PC-3 (cell line): ENCODE measurements at regions of chr12 and their contacts with region 1.

Region 1: GRCh38 chr12:76784600-76785051 is 20.7 kb downstream of the ZDHHC17 start:
- DNase-seq: peak; percentile 43
- ATAC-seq: peak; percentile 44
- H3K4me3 ChIP-seq: no peak overlapping the region
- H3K27ac ChIP-seq: peak overlapping the region; percentile 70
- H3K4me1 ChIP-seq: peaks cover 15% of the 10 kb centered on the region
- H3K27me3 ChIP-seq: no peaks in the 10 kb centered on the region
- CTCF ChIP-seq: no peak

Region 2: DNA sequence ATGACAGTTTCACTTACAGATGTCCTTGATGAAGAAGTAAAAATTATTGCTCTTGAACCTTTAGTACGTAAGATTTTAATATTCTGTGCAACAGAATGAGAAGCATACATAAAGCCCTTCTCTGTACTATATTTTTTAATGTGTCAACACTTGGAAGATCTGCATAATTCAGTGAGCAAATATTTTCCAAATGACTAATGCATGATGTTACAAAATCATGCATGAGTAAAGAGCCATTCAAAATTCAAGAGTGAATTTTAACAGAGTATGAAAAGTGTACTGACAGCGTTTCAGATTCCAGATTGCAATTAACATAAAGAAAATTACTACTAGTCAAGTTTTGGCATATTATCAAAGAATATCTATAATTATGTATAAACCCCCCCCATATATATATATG is 335.0 kb before region 1 on chr12:
- CTCF ChIA-PET with region 1: no interaction called
- POLR2A ChIA-PET with region 1: no interaction called
- intact Hi-C with region 1: no loop called
- DNase-seq: peak; percentile 87
- ATAC-seq: peak; percentile 86
- H3K4me3 ChIP-seq: peak overlapping the region; percentile 42; the same call in 1 of the 2 replicates
- H3K27ac ChIP-seq: peak overlapping the region; percentile 72
- H3K4me1 ChIP-seq: peaks cover 27% of the 10 kb centered on the region
- H3K27me3 ChIP-seq: no peaks in the 10 kb centered on the region
- CTCF ChIP-seq: no peak

Region 3: GRCh38 chr12:76641961-76642360 is 142.7 kb before region 1 on chr12:
- CTCF ChIA-PET with region 1: no interaction called
- POLR2A ChIA-PET with region 1: interaction called, 41 read pairs
- intact Hi-C with region 1: no loop called
- DNase-seq: no peak
- ATAC-seq: no peak
- H3K4me3 ChIP-seq: no peak overlapping the region
- H3K27ac ChIP-seq: no peak overlapping the region
- H3K4me1 ChIP-seq: peaks cover 23% of the 10 kb centered on the region
- H3K27me3 ChIP-seq: no peaks in the 10 kb centered on the region
- CTCF ChIP-seq: no peak

Region 4: GRCh38 chr12:76763743-76764675 is 20.6 kb before region 1 on chr12 and contains the start of gene ZDHHC17:
- CTCF ChIA-PET with region 1: no interaction called
- POLR2A ChIA-PET with region 1: interaction called, 4 read pairs
- intact Hi-C with region 1: loop called (anchors 1 kb)
- DNase-seq: peak; percentile 94
- ATAC-seq: peak; percentile 90
- H3K4me3 ChIP-seq: peak within 1 kb of the TSS; percentile 100
- H3K27ac ChIP-seq: peak within 1 kb of the TSS; percentile 86
- H3K4me1 ChIP-seq: peaks cover 15% of the 10 kb centered on the region; the same call in 1 of the 2 replicates
- H3K27me3 ChIP-seq: no peaks in the 10 kb centered on the region
- CTCF ChIP-seq: no peak
- total RNA-seq, gene ZDHHC17: 35.3 and 42.4 TPM in 2 replicates

Region 5: GRCh38 chr12:76836633-76837032 is 52.0 kb after region 1 on chr12:
- CTCF ChIA-PET with region 1: no interaction called
- POLR2A ChIA-PET with region 1: no interaction called
- intact Hi-C with region 1: no loop called
- DNase-seq: no peak
- ATAC-seq: no peak
- H3K4me3 ChIP-seq: no peak overlapping the region
- H3K27ac ChIP-seq: no peak overlapping the region
- H3K4me1 ChIP-seq: no peaks in the 10 kb centered on the region
- H3K27me3 ChIP-seq: no peaks in the 10 kb centered on the region
- CTCF ChIP-seq: no peak